ENCODE measurements at regions of chr16 and their contacts with region 1.

Region 1: GRCh38 chr16:67942200-67942509 is 1.8 kb downstream of the LCAT start:
- DNase-seq: peak; percentile 66 to 67
- ATAC-seq: peak; percentile 79 to 85
- H3K4me3 ChIP-seq: no peak overlapping the region
- H3K27ac ChIP-seq: no peak overlapping the region
- H3K4me1 ChIP-seq: peaks cover 4% of the 10 kb centered on the region; the same call in 2 of the 3 replicates
- CTCF ChIP-seq: peak; percentile 55
- EP300 ChIP-seq: no peak
- POLR2A ChIP-seq: no peak
- RAD21 ChIP-seq: peak; percentile 33 to 47; a peak in 3 of 5 replicates

Region 2: GRCh38 chr16:67897231-67897630 is 44.9 kb before region 1 on chr16:
- CTCF ChIA-PET with region 1: no interaction called
- POLR2A ChIA-PET with region 1: no interaction called
- DNase-seq: no peak
- ATAC-seq: no peak
- H3K4me3 ChIP-seq: no peak overlapping the region
- H3K27ac ChIP-seq: no peak overlapping the region
- H3K4me1 ChIP-seq: peaks cover 9% of the 10 kb centered on the region; the same call in 2 of the 3 replicates
- CTCF ChIP-seq: no peak
- EP300 ChIP-seq: no peak
- POLR2A ChIP-seq: no peak
- RAD21 ChIP-seq: no peak

Region 3: GRCh38 chr16:67966549-67967182 is 24.5 kb after region 1 on chr16:
- CTCF ChIA-PET with region 1: interaction called, 11 read pairs
- POLR2A ChIA-PET with region 1: no interaction called
- DNase-seq: peak in 1 of 2 experiments; percentile 44
- ATAC-seq: peak in 1 of 2 experiments; percentile 51; a peak in 3 of 6 replicates
- H3K4me3 ChIP-seq: peak overlapping the region; percentile 95; the same call in 2 of the 3 replicates
- H3K27ac ChIP-seq: peak overlapping the region; percentile 58 to 95
- H3K4me1 ChIP-seq: peaks cover 25% of the 10 kb centered on the region
- CTCF ChIP-seq: no peak
- EP300 ChIP-seq: no peak
- POLR2A ChIP-seq: no peak
- RAD21 ChIP-seq: no peak

Region 4: GRCh38 chr16:68166264-68166663 is 224.1 kb after region 1 on chr16:
- CTCF ChIA-PET with region 1: no interaction called
- POLR2A ChIA-PET with region 1: no interaction called
- DNase-seq: no peak
- ATAC-seq: no peak
- H3K4me3 ChIP-seq: no peak overlapping the region
- H3K27ac ChIP-seq: no peak overlapping the region
- H3K4me1 ChIP-seq: no peaks in the 10 kb centered on the region
- CTCF ChIP-seq: no peak
- EP300 ChIP-seq: no peak
- POLR2A ChIP-seq: no peak
- RAD21 ChIP-seq: no peak

Measured in A549 (cell line).